A673 (cell line): ENCODE measurements at regions of chr9 and their contacts with region 1.

Region 1: GRCh38 chr9:14719231-14719923 is 3.2 kb downstream of the CER1 start:
- DNase-seq: peak; percentile 81
- H3K4me3 ChIP-seq: peak overlapping the region; percentile 60
- H3K27ac ChIP-seq: peak overlapping the region; percentile 100
- H3K4me1 ChIP-seq: peaks cover 54% of the 10 kb centered on the region
- H3K27me3 ChIP-seq: no peaks in the 10 kb centered on the region
- CTCF ChIP-seq: no peak

Region 2: GRCh38 chr9:14616188-14616982 is 103.0 kb before region 1 on chr9:
- CTCF ChIA-PET with region 1: no interaction called
- POLR2A ChIA-PET with region 1: no interaction called
- intact Hi-C with region 1: loop called (anchors 2 kb)
- DNase-seq: peak; percentile 70
- H3K4me3 ChIP-seq: no peak overlapping the region
- H3K27ac ChIP-seq: no peak overlapping the region
- H3K4me1 ChIP-seq: peaks cover 20% of the 10 kb centered on the region
- H3K27me3 ChIP-seq: no peaks in the 10 kb centered on the region
- CTCF ChIP-seq: peak; percentile 69